Mammary epithelial cell (primary cell): ENCODE measurements at regions of chr3 and their contacts with region 1.

Region 1: GRCh38 chr3:113136071-113136470 is 75.3 kb upstream of the BOC start:
- DNase-seq: peak; percentile 17
- H3K4me3 ChIP-seq: no peak overlapping the region
- H3K27ac ChIP-seq: no peak overlapping the region
- H3K4me1 ChIP-seq: peaks cover 8% of the 10 kb centered on the region
- H3K27me3 ChIP-seq: no peaks in the 10 kb centered on the region
- CTCF ChIP-seq: peak; percentile 47 to 61

Region 2: GRCh38 chr3:111936191-111936841 is 1199.8 kb before region 1 on chr3:
- CTCF ChIA-PET with region 1: no interaction called
- dilution Hi-C with region 1: no loop called
- in situ Hi-C with region 1: no loop called
- intact Hi-C with region 1: no loop called
- DNase-seq: peak; percentile 37
- H3K4me3 ChIP-seq: no peak overlapping the region
- H3K27ac ChIP-seq: peak overlapping the region; percentile 99
- H3K4me1 ChIP-seq: peaks cover 29% of the 10 kb centered on the region
- H3K27me3 ChIP-seq: no peaks in the 10 kb centered on the region
- CTCF ChIP-seq: no peak

Region 3: GRCh38 chr3:113275929-113276750 is 140.1 kb after region 1 on chr3:
- CTCF ChIA-PET with region 1: no interaction called
- dilution Hi-C with region 1: no loop called
- in situ Hi-C with region 1: no loop called
- intact Hi-C with region 1: loop called (anchors 2 kb)
- DNase-seq: peak; percentile 70
- H3K4me3 ChIP-seq: peak overlapping the region in 1 of 3 experiments; percentile 20
- H3K27ac ChIP-seq: peak overlapping the region; percentile 4
- H3K4me1 ChIP-seq: peaks cover 17% of the 10 kb centered on the region
- H3K27me3 ChIP-seq: no peaks in the 10 kb centered on the region
- CTCF ChIP-seq: peak; percentile 14 to 21

Region 4: GRCh38 chr3:113312416-113312815 is 176.3 kb after region 1 on chr3:
- CTCF ChIA-PET with region 1: no interaction called
- dilution Hi-C with region 1: no loop called
- in situ Hi-C with region 1: no loop called
- intact Hi-C with region 1: no loop called
- DNase-seq: no peak
- H3K4me3 ChIP-seq: no peak overlapping the region
- H3K27ac ChIP-seq: no peak overlapping the region
- H3K4me1 ChIP-seq: no peaks in the 10 kb centered on the region
- H3K27me3 ChIP-seq: no peaks in the 10 kb centered on the region
- CTCF ChIP-seq: no peak